ENCODE measurements at regions of chr15 and their contacts with region 1.

Region 1: GRCh38 chr15:45795440-45796069 is 160.7 kb downstream of the SQOR start:
- DNase-seq: peak in 1 of 3 donors; percentile 62
- ATAC-seq: peak; percentile 87
- H3K4me3 ChIP-seq: no peak overlapping the region
- H3K4me1 ChIP-seq: peaks cover 7% of the 10 kb centered on the region
- CTCF ChIP-seq: peak; percentile 42

Region 2: DNA sequence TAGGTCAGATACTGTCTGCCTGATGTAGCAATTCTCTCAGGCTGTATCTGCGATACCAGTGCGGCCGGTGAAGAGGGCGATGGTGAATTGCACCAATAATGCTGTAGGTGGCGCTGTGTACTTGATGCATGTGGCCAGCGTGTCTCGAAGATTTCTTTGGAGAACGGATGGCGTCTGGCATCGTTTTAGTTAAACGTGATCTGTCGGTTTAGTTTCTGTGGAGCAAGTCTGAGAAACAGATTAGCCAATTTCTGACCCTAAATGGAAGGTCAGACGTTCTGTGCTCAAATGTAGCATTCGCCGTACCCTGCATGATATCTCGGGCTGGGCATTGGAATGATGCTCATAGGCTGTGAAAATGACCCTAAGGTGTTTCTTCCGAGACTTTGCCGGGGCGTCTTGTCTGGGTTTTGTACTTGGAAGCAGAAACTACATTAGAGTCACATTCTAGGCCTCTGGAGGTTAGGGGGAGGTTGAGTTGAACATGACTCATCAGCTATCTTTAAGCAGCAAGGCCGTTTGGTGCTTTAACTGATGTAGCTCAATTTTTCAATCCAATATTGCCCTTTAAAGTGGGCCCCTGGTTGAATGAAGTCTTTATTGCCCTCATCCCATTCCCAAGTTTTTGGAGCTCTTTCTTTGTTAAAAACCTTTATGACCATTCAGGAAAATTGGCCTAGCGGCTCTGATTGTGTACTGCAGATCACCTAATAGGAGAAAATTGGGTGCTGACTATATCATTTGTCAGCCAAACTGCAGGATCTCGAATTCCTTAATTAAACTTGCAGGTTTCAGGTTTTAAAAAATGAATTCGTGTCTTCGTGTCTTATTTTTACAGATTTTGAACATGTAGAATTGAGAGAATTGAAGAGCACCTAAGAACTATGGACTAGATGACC is 80.7 kb before region 1 on chr15:
- intact Hi-C with region 1: loop called (anchors 5 to 10 kb)
- DNase-seq: peak in 2 of 3 donors; percentile 67 to 77
- ATAC-seq: peak; percentile 92
- H3K4me3 ChIP-seq: no peak overlapping the region
- H3K4me1 ChIP-seq: no peaks in the 10 kb centered on the region
- CTCF ChIP-seq: peak; percentile 73

Measured in mucosa of descending colon (tissue), 3 donors.